ENCODE measurements at regions of chr11 and their contacts with region 1.

Region 1: GRCh38 chr11:120682866-120683265 is 171.3 kb downstream of the GRIK4 start:
- DNase-seq: no peak
- ATAC-seq: no peak
- H3K4me3 ChIP-seq: no peak overlapping the region
- H3K27ac ChIP-seq: no peak overlapping the region
- H3K4me1 ChIP-seq: no peaks in the 10 kb centered on the region; the same call in 1 of the 2 replicates
- H3K27me3 ChIP-seq: no peaks in the 10 kb centered on the region
- CTCF ChIP-seq: no peak
- EP300 ChIP-seq: no peak
- POLR2A ChIP-seq: no peak
- RAD21 ChIP-seq: no peak

Region 2: DNA sequence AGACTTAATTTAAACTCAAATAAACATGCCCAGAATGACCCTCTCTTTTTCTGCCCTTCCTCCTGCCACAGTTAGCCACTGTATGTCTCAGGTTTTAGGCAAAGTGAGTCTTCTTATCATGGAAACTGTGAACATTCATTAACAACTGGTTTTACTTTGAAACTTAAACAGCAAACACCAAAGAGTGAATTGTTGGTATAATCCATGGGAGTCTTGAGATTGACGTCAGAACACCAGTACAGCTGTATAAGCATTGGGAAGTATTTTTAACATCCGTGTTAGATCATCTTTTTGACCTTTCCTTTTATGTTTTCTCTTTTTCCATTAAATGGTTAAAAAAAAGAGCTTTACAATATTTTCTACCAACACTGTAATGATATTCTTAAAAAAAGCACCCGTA is 307.8 kb before region 1 on chr11:
- CTCF ChIA-PET with region 1: no interaction called
- POLR2A ChIA-PET with region 1: no interaction called
- RAD21 ChIA-PET with region 1: no interaction called
- SMC1A ChIA-PET with region 1: no interaction called
- in situ Hi-C with region 1: no loop called
- intact Hi-C with region 1: no loop called
- DNase-seq: no peak
- ATAC-seq: no peak
- H3K4me3 ChIP-seq: no peak overlapping the region
- H3K27ac ChIP-seq: no peak overlapping the region
- H3K4me1 ChIP-seq: no peaks in the 10 kb centered on the region
- H3K27me3 ChIP-seq: no peaks in the 10 kb centered on the region
- CTCF ChIP-seq: no peak
- EP300 ChIP-seq: no peak
- POLR2A ChIP-seq: no peak
- RAD21 ChIP-seq: no peak

Region 3: DNA sequence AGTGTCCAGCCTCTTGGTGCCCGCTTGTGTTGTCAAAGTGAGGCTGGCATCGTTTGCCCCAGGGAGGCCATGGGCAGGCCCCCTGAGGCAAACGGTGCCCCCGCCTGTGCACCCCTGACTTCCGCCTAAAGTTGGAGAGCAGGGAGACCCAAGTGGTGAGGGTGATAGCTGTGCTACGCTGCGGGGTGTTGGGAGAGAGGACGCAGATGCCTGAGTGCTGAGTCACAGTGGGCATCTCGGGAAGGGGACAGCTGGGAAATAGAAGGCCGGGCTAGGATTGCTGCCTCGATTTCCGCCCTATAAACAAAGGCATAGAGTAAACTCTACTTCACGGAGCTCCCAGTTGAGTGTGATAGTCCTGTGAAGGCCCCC is 165.5 kb before region 1 on chr11:
- CTCF ChIA-PET with region 1: interaction called, 95 read pairs
- POLR2A ChIA-PET with region 1: no interaction called
- RAD21 ChIA-PET with region 1: interaction called, 64 read pairs
- SMC1A ChIA-PET with region 1: interaction called, 32 read pairs
- in situ Hi-C with region 1: loop called (anchors 10 kb)
- intact Hi-C with region 1: no loop called
- DNase-seq: no peak
- ATAC-seq: no peak
- H3K4me3 ChIP-seq: no peak overlapping the region
- H3K27ac ChIP-seq: no peak overlapping the region
- H3K4me1 ChIP-seq: no peaks in the 10 kb centered on the region
- H3K27me3 ChIP-seq: no peaks in the 10 kb centered on the region
- CTCF ChIP-seq: no peak
- EP300 ChIP-seq: no peak
- POLR2A ChIP-seq: no peak
- RAD21 ChIP-seq: no peak

Region 4: GRCh38 chr11:120612513-120613263 is 70.2 kb before region 1 on chr11:
- CTCF ChIA-PET with region 1: interaction called, 32 read pairs
- POLR2A ChIA-PET with region 1: interaction called, 5 read pairs
- RAD21 ChIA-PET with region 1: interaction called, 26 read pairs
- SMC1A ChIA-PET with region 1: interaction called, 23 read pairs
- in situ Hi-C with region 1: no loop called
- intact Hi-C with region 1: no loop called
- DNase-seq: peak; percentile 94
- ATAC-seq: peak; percentile 91
- H3K4me3 ChIP-seq: no peak overlapping the region; the same call in 1 of the 2 replicates
- H3K27ac ChIP-seq: peak overlapping the region; percentile 75
- H3K4me1 ChIP-seq: peaks cover 32% of the 10 kb centered on the region
- H3K27me3 ChIP-seq: no peaks in the 10 kb centered on the region
- CTCF ChIP-seq: peak in 1 of 3 experiments; percentile 19; a peak in 1 of 6 replicates
- EP300 ChIP-seq: peak; percentile 76 to 89; a peak in 3 of 4 replicates
- POLR2A ChIP-seq: no peak; the same call in 1 of the 2 replicates
- RAD21 ChIP-seq: no peak

Region 5: GRCh38 chr11:120645639-120646038 is 37.2 kb before region 1 on chr11:
- CTCF ChIA-PET with region 1: interaction called, 14 read pairs
- POLR2A ChIA-PET with region 1: no interaction called
- RAD21 ChIA-PET with region 1: interaction called, 6 read pairs
- SMC1A ChIA-PET with region 1: interaction called, 7 read pairs
- in situ Hi-C with region 1: no loop called
- intact Hi-C with region 1: no loop called
- DNase-seq: no peak
- ATAC-seq: no peak
- H3K4me3 ChIP-seq: no peak overlapping the region
- H3K27ac ChIP-seq: no peak overlapping the region
- H3K4me1 ChIP-seq: no peaks in the 10 kb centered on the region
- H3K27me3 ChIP-seq: no peaks in the 10 kb centered on the region; a peak in 1 of 4 replicates
- CTCF ChIP-seq: no peak
- EP300 ChIP-seq: no peak
- POLR2A ChIP-seq: no peak
- RAD21 ChIP-seq: no peak

Region 6: DNA sequence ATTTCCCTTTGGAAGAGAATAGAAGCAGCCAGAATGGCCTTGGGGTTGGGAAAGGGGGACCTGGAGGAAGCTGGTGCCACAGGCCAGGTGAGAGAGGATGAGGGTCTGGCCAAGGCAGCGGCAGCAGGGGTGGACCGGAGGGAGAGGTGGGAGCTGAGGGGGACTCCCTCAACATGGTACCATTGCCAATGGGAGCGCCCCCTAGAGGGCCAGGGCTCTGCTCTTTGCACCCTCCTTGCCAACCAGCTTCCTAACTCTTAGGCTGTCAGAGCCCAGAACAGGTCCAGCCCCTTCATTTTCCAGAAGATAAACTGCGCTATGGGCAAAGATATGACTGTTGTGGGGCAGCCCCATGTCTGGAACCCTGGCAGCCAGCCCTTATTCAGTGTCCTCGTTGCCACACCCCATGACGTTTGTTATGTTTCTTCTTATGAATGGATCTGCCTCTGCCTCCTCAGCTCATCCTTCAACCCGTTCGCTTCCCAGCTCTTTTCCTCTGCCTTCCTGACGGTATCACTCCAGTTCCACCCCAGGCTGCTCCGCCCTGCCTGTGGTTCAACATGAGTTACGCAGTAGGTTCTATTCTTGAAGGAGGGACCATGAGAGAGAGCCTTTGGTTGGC is 13.8 kb after region 1 on chr11:
- CTCF ChIA-PET with region 1: interaction called, 57 read pairs
- POLR2A ChIA-PET with region 1: no interaction called
- RAD21 ChIA-PET with region 1: interaction called, 5 read pairs
- SMC1A ChIA-PET with region 1: interaction called, 12 read pairs
- in situ Hi-C with region 1: no loop called
- intact Hi-C with region 1: no loop called
- DNase-seq: no peak
- ATAC-seq: peak; percentile 32; the same call in 1 of the 3 replicates
- H3K4me3 ChIP-seq: no peak overlapping the region
- H3K27ac ChIP-seq: no peak overlapping the region
- H3K4me1 ChIP-seq: peaks cover 1% of the 10 kb centered on the region; the same call in 1 of the 2 replicates
- H3K27me3 ChIP-seq: no peaks in the 10 kb centered on the region
- CTCF ChIP-seq: peak in 2 of 3 experiments; percentile 18 to 40; a peak in 3 of 6 replicates
- EP300 ChIP-seq: no peak
- POLR2A ChIP-seq: no peak
- RAD21 ChIP-seq: no peak

Region 7: GRCh38 chr11:120746836-120747609 is 64.2 kb after region 1 on chr11:
- CTCF ChIA-PET with region 1: interaction called, 10 read pairs
- POLR2A ChIA-PET with region 1: no interaction called
- RAD21 ChIA-PET with region 1: no interaction called
- SMC1A ChIA-PET with region 1: interaction called, 4 read pairs
- in situ Hi-C with region 1: no loop called
- intact Hi-C with region 1: no loop called
- DNase-seq: no peak
- ATAC-seq: peak; percentile 63
- H3K4me3 ChIP-seq: no peak overlapping the region
- H3K27ac ChIP-seq: no peak overlapping the region
- H3K4me1 ChIP-seq: no peaks in the 10 kb centered on the region
- H3K27me3 ChIP-seq: no peaks in the 10 kb centered on the region
- CTCF ChIP-seq: no peak
- EP300 ChIP-seq: no peak
- POLR2A ChIP-seq: no peak
- RAD21 ChIP-seq: no peak

Region 8: DNA sequence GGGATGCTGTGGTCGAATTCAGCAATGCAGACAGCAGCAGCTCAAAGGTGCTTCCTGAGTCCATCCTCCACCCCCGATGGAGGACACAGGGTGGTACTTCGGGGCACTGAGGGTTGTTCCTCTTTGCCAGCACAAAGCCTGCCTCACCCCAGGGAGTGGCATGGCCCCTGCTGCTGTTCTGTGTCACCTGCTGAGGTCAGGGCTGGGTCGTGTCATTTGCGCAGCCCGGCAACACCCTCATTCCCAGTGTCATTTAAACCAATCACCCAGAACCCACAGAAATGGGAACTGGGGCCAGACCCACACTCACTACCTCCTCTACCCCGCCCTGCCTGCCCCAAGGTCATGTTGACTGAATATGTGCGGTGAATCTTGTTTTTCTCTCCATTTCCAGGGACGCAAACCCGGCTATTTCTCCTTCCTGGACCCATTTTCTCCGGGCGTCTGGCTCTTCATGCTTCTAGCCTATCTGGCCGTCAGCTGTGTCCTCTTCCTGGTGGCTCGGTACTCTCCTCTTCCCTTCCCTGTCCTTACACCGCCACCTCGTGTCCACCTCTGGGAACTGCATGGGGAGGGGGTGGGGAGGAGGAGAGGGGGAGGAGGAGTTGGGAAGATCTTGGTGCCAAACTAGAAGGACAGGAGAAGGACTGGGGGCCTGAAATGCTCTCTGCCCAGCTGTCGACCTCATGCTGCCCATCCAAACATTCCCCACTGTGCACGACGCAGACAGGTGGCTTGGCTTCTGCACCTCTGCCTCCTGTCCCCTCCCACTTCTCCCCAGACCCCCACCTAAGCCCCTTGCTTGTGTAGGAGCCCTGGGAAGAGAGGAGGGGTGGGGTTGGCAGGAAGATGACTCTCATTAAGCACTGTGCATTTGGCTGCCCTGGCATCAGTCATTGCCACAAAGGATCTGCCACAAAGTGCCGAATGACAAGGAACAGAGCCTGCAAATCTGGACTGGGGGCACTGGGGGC is 269.9 kb after region 1 on chr11:
- CTCF ChIA-PET with region 1: interaction called, 21 read pairs
- POLR2A ChIA-PET with region 1: interaction called, 3 read pairs
- RAD21 ChIA-PET with region 1: interaction called, 5 read pairs
- SMC1A ChIA-PET with region 1: interaction called, 15 read pairs
- in situ Hi-C with region 1: no loop called
- intact Hi-C with region 1: no loop called
- DNase-seq: peak; percentile 26
- ATAC-seq: peak; percentile 91
- H3K4me3 ChIP-seq: no peak overlapping the region
- H3K27ac ChIP-seq: no peak overlapping the region
- H3K4me1 ChIP-seq: peaks cover 8% of the 10 kb centered on the region
- H3K27me3 ChIP-seq: no peaks in the 10 kb centered on the region; a peak in 1 of 4 replicates
- CTCF ChIP-seq: peak; percentile 80 to 96 (median 83)
- EP300 ChIP-seq: no peak
- POLR2A ChIP-seq: no peak
- RAD21 ChIP-seq: peak; percentile 97

Region 9: DNA sequence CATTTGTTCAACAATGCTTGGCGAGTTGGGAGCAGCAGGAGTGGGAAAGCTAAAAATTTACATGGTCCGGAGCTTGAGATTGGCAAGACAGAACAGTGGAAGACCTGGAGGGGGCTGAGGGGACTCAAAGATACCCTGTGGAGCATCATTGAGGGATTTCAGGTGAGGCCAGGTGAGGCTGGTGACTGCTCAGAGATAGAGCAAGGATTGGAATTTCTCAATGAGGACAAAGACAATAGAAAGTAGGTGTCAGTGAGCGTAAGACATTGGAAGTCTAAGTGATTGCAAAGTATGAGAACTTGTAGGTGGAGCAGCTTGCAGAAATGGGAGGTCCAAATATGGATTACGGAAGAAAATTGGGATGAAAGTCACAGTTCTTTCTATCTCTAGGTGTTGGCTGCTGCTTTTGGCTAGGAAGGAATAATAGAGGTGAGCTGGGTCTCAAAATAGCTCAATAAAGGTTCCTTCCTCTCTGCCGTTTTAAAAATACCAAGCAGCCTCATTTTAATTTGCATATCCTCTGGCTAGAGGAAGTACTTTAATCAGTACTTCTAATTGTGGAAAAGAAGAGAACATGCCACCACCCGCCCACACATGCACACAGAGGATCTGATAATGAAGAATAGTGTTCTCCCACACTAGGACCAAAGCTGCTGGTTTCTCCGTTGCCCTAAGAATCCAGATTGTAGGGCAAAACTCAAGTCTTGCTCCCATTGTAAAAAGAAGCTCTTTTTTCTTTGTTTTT is 811.7 kb after region 1 on chr11:
- CTCF ChIA-PET with region 1: no interaction called
- POLR2A ChIA-PET with region 1: no interaction called
- RAD21 ChIA-PET with region 1: no interaction called
- SMC1A ChIA-PET with region 1: no interaction called
- in situ Hi-C with region 1: no loop called
- intact Hi-C with region 1: no loop called
- DNase-seq: peak; percentile 69
- ATAC-seq: peak; percentile 87
- H3K4me3 ChIP-seq: peak overlapping the region; percentile 24
- H3K27ac ChIP-seq: peak overlapping the region; percentile 66
- H3K4me1 ChIP-seq: peaks cover 32% of the 10 kb centered on the region
- H3K27me3 ChIP-seq: no peaks in the 10 kb centered on the region
- CTCF ChIP-seq: no peak
- EP300 ChIP-seq: no peak
- POLR2A ChIP-seq: no peak
- RAD21 ChIP-seq: no peak

Measured in GM12878 (cell line).